Breast epithelium (tissue), 4 donors: ENCODE measurements at regions of chr2 and their contacts with region 1.

Region 1: DNA sequence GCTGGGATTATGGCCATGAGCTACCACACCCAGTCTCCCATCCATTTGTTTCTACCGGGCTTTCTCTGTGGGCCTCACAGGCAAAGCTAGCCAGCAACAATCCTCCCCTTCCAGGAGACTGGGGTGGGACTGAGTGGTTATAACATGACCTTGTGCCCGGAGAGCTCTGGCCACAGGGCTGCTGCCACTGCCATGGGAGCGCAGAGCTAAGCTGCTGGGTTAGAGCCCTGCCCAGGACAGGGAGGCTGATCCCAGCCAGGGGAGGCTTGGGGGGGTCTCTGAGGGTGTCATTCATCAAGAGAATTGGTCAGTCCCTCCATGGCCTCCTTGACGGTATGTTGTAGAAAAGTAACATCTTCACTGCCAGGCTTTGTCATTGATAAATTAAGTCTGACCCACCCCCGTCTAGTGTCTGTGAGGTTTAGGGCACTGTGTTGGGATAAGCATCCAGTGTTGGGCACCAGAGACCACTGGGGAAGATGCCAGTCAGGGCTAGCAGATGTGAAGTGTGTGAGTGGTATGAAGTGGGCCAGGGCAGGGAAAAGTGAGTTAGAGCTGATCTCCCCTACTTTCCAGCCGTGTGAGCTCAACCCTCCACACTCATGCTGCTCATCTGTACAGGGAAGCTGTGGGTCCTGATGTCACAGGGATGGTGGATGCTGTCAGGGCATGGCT is 368.4 kb upstream of the HS6ST1 start:
- DNase-seq: no peak
- H3K4me3 ChIP-seq: no peak overlapping the region
- H3K27ac ChIP-seq: no peak overlapping the region
- H3K4me1 ChIP-seq: no peaks in the 10 kb centered on the region
- H3K27me3 ChIP-seq: no peaks in the 10 kb centered on the region
- CTCF ChIP-seq: no peak
- POLR2A ChIP-seq: no peak

Region 2: GRCh38 chr2:128305159-128306087 is 381.6 kb before region 1 on chr2:
- intact Hi-C with region 1: no loop called
- DNase-seq: peak; percentile 90 to 96
- H3K4me3 ChIP-seq: peak overlapping the region in 1 of 3 donors; percentile 55
- H3K27ac ChIP-seq: peak overlapping the region; percentile 88 to 98
- H3K4me1 ChIP-seq: peaks cover 47 to 68% of the 10 kb centered on the region in 2 donors
- H3K27me3 ChIP-seq: no peaks in the 10 kb centered on the region
- CTCF ChIP-seq: no peak
- POLR2A ChIP-seq: no peak

Region 3: DNA sequence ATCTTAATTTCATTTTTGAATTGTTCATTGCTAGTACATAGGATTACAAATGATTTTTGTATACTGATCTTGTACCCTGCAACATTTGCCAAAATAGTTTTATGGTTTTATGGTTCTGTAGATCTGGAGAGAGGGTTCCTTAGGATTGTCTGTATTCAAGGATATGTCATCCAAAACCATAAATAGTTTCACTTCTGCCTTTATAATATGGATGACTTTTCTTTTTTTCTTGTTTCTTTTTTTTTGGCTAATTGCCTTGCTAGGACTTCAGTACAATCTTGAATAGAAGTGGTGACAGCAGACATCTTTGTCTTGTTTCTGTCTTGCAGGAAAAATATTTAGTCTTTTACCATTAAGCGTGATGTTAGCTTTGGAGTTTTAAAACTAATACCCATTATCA is 15.6 kb after region 1 on chr2:
- intact Hi-C with region 1: loop called (anchors 1 kb)
- DNase-seq: no peak
- H3K4me3 ChIP-seq: no peak overlapping the region
- H3K27ac ChIP-seq: no peak overlapping the region
- H3K4me1 ChIP-seq: no peaks in the 10 kb centered on the region
- H3K27me3 ChIP-seq: no peaks in the 10 kb centered on the region
- CTCF ChIP-seq: no peak
- POLR2A ChIP-seq: no peak